ENCODE measurements at regions of chr10 and their contacts with region 1.

Region 1: GRCh38 chr10:20852303-20852702 is 44.8 kb downstream of the NEBL start:
- DNase-seq: no peak
- H3K4me3 ChIP-seq: no peak overlapping the region
- H3K27ac ChIP-seq: no peak overlapping the region
- H3K4me1 ChIP-seq: no peaks in the 10 kb centered on the region
- H3K27me3 ChIP-seq: no peaks in the 10 kb centered on the region
- CTCF ChIP-seq: no peak

Region 2: DNA sequence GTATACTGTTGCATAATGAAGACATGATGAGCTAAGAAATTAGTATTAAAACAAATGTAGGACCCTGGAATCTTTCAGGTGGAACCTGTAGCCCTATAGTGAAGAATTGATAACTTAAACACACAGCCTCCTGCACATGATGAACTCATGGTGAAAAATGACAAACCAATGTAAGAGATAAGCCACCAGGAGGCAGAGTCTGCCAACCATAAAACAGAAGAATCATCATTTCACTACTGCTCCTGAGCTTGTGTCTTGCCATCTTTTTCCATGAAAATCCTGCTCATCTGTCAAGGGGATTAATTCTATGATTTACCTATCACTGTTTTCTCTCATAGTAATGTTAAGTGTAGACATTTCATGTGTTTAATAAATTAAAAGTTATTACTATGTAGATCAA is 1439.8 kb before region 1 on chr10:
- CTCF ChIA-PET with region 1: no interaction called
- dilution Hi-C with region 1: no loop called
- in situ Hi-C with region 1: no loop called
- intact Hi-C with region 1: loop called (anchors 5 kb)
- DNase-seq: peak; percentile 19
- H3K4me3 ChIP-seq: no peak overlapping the region
- H3K27ac ChIP-seq: no peak overlapping the region
- H3K4me1 ChIP-seq: no peaks in the 10 kb centered on the region
- H3K27me3 ChIP-seq: no peaks in the 10 kb centered on the region
- CTCF ChIP-seq: peak; percentile 42 to 59

Region 3: DNA sequence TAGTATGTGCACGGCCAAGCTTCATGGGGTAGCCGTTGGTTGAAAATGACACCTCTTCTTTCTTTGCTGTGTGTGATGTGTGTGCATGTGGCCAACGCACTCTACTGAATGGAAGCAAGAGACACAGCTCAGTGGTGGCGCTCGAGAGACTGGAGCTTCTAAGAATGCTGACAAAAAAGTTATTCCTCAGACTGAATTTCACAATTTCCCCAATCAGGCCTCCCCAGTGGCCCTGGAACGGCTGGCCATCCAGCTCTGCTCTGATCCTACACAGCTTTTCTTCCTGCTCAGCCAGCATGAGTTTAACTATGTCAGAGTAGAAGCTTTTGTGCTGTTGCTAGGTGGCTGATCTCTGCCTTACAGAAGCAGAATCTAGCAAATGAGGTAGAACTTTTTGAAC is 1222.7 kb before region 1 on chr10:
- CTCF ChIA-PET with region 1: no interaction called
- dilution Hi-C with region 1: no loop called
- in situ Hi-C with region 1: no loop called
- intact Hi-C with region 1: loop called (anchors 10 kb)
- DNase-seq: no peak
- H3K4me3 ChIP-seq: no peak overlapping the region
- H3K27ac ChIP-seq: no peak overlapping the region
- H3K4me1 ChIP-seq: no peaks in the 10 kb centered on the region
- H3K27me3 ChIP-seq: no peaks in the 10 kb centered on the region
- CTCF ChIP-seq: no peak

Region 4: GRCh38 chr10:20776384-20777118 is 75.8 kb before region 1 on chr10:
- CTCF ChIA-PET with region 1: no interaction called
- dilution Hi-C with region 1: no loop called
- in situ Hi-C with region 1: no loop called
- intact Hi-C with region 1: loop called (anchors 5 kb)
- DNase-seq: no peak
- H3K4me3 ChIP-seq: no peak overlapping the region
- H3K27ac ChIP-seq: no peak overlapping the region
- H3K4me1 ChIP-seq: no peaks in the 10 kb centered on the region
- H3K27me3 ChIP-seq: peaks cover 4% of the 10 kb centered on the region
- CTCF ChIP-seq: no peak

Region 5: GRCh38 chr10:21020545-21020944 is 168.2 kb after region 1 on chr10:
- CTCF ChIA-PET with region 1: no interaction called
- dilution Hi-C with region 1: no loop called
- in situ Hi-C with region 1: no loop called
- intact Hi-C with region 1: no loop called
- DNase-seq: peak; percentile 9
- H3K4me3 ChIP-seq: no peak overlapping the region
- H3K27ac ChIP-seq: no peak overlapping the region
- H3K4me1 ChIP-seq: peaks cover 2% of the 10 kb centered on the region
- H3K27me3 ChIP-seq: no peaks in the 10 kb centered on the region
- CTCF ChIP-seq: peak; percentile 34 to 36